ENCODE measurements at regions of chr17 and their contacts with region 1.

Region 1: GRCh38 chr17:32341857-32342602 is at the start of gene C17orf75:
- DNase-seq: peak; percentile 84
- ATAC-seq: peak; percentile 89
- H3K4me3 Mint-ChIP-seq: peak within 1 kb of the TSS; percentile 95
- H3K27ac Mint-ChIP-seq: peak within 1 kb of the TSS; percentile 97
- H3K4me1 Mint-ChIP-seq: peaks cover 28% of the 10 kb centered on the region
- H3K27me3 Mint-ChIP-seq: no peaks in the 10 kb centered on the region
- total RNA-seq, gene C17orf75: 31.5 to 35.9 TPM

Region 2: DNA sequence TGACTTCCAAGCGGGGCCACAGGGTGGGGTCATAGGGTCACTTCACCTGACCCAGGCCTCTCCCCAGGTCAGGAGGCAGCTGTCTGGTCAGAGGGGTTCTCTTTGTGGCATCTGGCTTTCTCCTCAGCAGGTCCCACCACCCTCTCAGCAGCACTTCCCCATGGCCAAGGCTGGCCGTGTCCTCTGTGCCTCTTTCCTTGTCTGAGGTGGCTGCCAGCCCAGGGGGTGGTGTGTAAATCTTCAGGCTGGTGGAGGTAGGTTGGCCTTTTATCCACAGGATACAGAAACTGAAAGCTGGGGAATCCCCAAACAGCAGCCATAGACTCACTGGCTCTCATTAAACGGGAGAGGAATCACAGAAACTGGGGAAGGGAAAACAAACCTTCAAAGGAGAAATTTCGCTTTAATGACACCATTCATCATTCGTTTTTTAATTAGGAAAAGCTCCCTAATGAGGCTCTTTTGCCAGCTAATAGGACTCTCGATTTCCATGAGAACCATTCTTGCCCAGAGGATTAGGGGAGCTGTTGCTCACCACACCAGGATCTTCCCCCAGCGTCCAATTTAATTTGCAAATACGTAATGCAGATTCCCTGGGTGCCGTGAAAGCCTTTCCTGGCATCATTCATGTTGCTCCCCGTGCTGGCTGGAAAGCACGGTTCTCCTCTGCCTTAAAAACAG is 18.1 kb before region 1 on chr17:
- POLR2A ChIA-PET with region 1: interaction called, 51 read pairs
- DNase-seq: peak; percentile 58
- ATAC-seq: peak; percentile 84
- H3K4me3 Mint-ChIP-seq: peak overlapping the region; percentile 65
- H3K27ac Mint-ChIP-seq: peak overlapping the region; percentile 85
- H3K4me1 Mint-ChIP-seq: peaks cover 39% of the 10 kb centered on the region
- H3K27me3 Mint-ChIP-seq: no peaks in the 10 kb centered on the region

Region 3: DNA sequence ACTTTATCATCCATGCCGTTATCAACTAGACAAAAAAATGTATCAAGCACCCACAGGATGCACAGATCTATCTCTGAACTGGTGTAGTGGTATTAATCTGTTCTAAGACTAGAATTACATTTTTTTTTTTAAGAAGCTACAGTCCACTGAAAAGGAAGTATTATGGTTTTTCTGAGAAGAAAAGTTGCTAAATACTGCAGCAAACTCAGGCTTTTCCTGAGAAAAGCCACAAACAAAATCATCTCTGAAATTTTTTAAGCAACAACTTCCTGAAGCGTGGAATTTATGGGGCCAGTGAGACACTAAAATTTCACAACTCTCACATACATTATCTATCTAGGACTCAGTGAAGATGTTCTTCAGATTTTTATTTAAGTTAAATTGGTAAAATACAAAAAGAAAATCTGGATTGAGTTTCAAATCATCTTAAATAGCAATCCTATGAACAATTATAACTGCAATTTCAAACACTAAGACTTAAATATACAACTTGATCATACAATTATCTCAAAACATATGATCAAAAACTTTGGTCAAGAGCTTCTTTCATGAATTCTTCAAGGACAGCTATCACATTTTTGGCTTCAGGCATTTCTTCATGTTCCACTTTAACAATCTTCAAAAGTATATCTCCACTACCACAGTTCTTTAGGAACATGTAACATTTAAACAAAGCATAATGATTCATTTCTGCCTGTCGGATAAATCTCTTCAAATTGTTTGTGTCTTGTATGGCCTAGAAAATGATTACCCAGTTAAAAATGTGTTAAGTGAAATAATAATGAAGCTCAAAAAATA is 10.6 kb before region 1 on chr17:
- POLR2A ChIA-PET with region 1: interaction called, 51 read pairs
- DNase-seq: no peak
- ATAC-seq: peak; percentile 90
- H3K4me3 Mint-ChIP-seq: peak overlapping the region; percentile 74
- H3K27ac Mint-ChIP-seq: peak overlapping the region; percentile 81
- H3K4me1 Mint-ChIP-seq: peaks cover 46% of the 10 kb centered on the region
- H3K27me3 Mint-ChIP-seq: no peaks in the 10 kb centered on the region